MCF 10A (cell line): ENCODE measurements at regions of chr3 and their contacts with region 1.

Region 1: GRCh38 chr3:124887177-124887931 is at the start of gene ITGB5:
- DNase-seq: peak; percentile 90
- H3K4me3 Mint-ChIP-seq: peak within 1 kb of the TSS; percentile 75
- H3K27ac Mint-ChIP-seq: peak within 1 kb of the TSS; percentile 36
- H3K4me1 Mint-ChIP-seq: peaks cover 24% of the 10 kb centered on the region
- H3K27me3 Mint-ChIP-seq: no peaks in the 10 kb centered on the region
- CTCF ChIP-seq: no peak
- total RNA-seq, gene ITGB5: 100 and 101 TPM in 2 replicates

Region 2: DNA sequence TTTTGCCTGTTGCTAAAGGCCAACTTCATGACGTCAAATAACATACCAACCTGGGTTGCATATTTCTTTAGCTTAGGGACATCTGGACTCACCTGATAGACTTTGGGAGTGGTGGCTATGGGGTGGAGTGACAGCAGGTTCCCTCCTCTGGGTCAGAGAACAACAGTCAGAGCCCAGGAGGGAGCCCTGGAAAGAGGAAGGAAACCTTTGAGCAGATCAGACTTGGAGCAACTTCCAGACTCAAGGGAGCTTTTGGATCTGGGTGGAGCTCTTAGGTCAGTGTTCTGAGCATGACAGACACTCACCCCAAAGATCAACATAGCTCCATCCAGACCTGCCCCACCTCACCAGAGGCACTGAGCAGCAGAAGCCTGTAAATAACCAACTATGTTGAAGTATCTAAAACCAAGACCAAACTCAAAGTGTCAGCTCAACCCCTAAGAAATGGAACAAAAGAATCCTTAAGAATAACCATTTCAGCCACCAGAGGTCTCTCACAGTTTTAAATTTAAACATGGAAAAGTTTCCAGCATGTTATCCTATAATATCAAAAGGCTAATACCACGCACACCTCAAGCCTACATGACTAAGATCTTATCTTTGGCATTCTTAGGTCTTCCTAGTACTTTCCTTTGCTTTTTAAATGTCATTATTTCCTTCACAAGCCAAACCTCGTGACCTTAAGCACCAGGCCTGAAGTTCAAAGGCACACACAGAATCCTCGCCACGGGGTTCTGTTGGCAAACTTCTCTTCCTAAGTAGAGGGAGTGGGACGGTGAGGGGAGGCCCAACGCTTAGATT is 100.7 kb before region 1 on chr3:
- CTCF ChIA-PET with region 1: interaction called, 55 read pairs
- POLR2A ChIA-PET with region 1: interaction called, 15 read pairs
- intact Hi-C with region 1: loop called (anchors 1 kb)
- DNase-seq: peak; percentile 41
- H3K4me3 Mint-ChIP-seq: no peak overlapping the region
- H3K27ac Mint-ChIP-seq: peak overlapping the region; percentile 23
- H3K4me1 Mint-ChIP-seq: peaks cover 10% of the 10 kb centered on the region
- H3K27me3 Mint-ChIP-seq: no peaks in the 10 kb centered on the region
- CTCF ChIP-seq: peak; percentile 38

Region 3: GRCh38 chr3:124791639-124792151 is 95.7 kb before region 1 on chr3:
- CTCF ChIA-PET with region 1: interaction called, 55 read pairs
- POLR2A ChIA-PET with region 1: interaction called, 15 read pairs
- intact Hi-C with region 1: loop called (anchors 1 kb)
- DNase-seq: no peak
- H3K4me3 Mint-ChIP-seq: no peak overlapping the region
- H3K27ac Mint-ChIP-seq: no peak overlapping the region
- H3K4me1 Mint-ChIP-seq: peaks cover 28% of the 10 kb centered on the region
- H3K27me3 Mint-ChIP-seq: no peaks in the 10 kb centered on the region
- CTCF ChIP-seq: no peak

Region 4: GRCh38 chr3:124812291-124813265 is 74.8 kb before region 1 on chr3:
- CTCF ChIA-PET with region 1: no interaction called
- POLR2A ChIA-PET with region 1: interaction called, 4 read pairs
- intact Hi-C with region 1: loop called (anchors 2 kb)
- DNase-seq: peak; percentile 94
- H3K4me3 Mint-ChIP-seq: peak overlapping the region; percentile 44
- H3K27ac Mint-ChIP-seq: peak overlapping the region; percentile 49
- H3K4me1 Mint-ChIP-seq: peaks cover 44% of the 10 kb centered on the region
- H3K27me3 Mint-ChIP-seq: no peaks in the 10 kb centered on the region
- CTCF ChIP-seq: no peak

Region 5: DNA sequence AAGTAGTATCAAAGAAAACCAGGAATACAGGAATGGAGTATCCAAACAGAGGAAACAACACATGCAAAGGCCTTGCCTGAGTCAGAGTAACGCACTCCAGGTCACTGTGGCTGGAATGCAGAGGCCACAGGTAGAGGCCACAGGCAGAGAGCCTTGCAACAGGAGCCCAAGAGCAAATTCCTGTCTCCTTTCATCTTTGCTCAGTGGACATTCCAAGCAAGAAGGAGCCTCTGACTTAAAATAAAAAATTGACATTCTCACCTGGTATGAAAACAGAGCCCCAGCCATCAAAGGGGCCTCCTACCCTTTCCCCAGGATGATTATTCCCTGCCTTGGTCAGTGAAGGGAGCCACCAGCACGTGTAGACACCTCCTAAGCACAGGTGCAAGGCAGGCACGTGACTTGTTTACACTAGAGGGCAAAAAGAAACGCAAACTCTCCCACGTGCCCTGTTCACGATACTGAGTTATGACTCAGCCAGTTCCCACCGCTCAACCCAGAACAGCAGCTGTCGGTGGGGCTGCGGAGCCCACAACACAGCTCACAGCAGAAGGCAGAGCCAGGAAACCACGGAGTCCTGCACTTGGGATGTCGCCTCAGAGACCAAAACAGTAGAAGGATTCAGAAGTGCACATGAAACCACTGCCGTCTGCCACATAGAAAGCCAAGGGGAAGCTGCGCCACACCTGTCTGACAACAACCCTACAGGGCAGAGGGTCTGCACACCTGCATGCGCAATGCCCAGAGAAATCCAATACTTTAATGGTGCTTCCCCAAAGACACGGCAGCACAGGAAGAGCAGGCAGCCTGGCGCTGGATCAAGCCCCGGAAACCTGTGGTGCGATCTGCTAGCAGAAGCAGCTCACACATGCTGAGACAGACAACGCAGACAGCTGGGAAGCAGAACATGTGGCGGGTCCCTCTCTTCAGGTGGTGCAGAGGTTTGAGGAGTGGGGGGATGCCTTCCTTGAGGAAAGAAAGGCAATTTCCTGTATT is 52.3 kb before region 1 on chr3:
- CTCF ChIA-PET with region 1: interaction called, 3 read pairs
- POLR2A ChIA-PET with region 1: interaction called, 7 read pairs
- intact Hi-C with region 1: loop called (anchors 2 kb)
- DNase-seq: peak; percentile 87
- H3K4me3 Mint-ChIP-seq: peak overlapping the region; percentile 35
- H3K27ac Mint-ChIP-seq: peak overlapping the region; percentile 39
- H3K4me1 Mint-ChIP-seq: peaks cover 51% of the 10 kb centered on the region
- H3K27me3 Mint-ChIP-seq: no peaks in the 10 kb centered on the region
- CTCF ChIP-seq: no peak

Region 6: DNA sequence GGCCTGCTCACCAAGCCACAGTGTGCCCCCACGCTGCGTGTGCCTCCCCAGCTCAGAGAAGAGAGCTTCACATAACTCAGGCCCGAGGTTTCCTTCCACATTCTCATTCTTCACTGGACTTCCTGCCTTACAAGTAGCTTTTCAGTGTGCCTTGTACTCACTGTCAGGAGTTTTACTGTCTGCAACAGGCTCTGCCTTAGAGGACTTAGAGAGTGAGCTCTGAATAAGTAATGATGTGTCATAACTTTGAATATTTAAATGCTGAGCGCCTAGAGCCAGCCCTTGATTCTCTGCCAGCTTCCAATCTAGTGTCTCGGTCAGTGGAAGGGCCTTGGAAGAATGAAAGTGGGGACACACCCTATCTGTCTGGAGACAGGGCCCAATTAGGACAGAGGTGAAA is 41.9 kb before region 1 on chr3:
- CTCF ChIA-PET with region 1: interaction called, 9 read pairs
- POLR2A ChIA-PET with region 1: interaction called, 26 read pairs
- intact Hi-C with region 1: no loop called
- DNase-seq: peak; percentile 87
- H3K4me3 Mint-ChIP-seq: peak overlapping the region; percentile 12
- H3K27ac Mint-ChIP-seq: peak overlapping the region; percentile 71
- H3K4me1 Mint-ChIP-seq: peaks cover 14% of the 10 kb centered on the region
- H3K27me3 Mint-ChIP-seq: no peaks in the 10 kb centered on the region
- CTCF ChIP-seq: no peak

Region 7: DNA sequence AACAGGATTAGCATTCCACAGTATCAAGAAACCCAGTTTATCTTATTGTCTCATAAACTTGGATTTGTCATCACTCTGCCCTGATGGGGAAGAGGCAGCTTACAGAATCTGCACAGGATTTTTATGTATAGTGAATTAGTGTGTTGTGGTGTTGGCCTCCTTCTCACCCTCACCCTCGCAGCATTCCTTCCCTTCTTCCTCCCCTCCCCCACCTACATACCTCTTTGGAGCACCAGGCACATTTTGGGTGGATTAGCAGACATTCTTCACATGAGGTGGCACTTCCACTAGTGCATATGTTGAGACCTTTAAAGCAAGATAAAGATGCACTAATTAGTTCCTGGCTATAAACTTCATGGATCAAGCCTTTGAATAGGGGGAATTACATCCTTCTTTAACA is 14.1 kb before region 1 on chr3:
- CTCF ChIA-PET with region 1: interaction called, 4 read pairs
- POLR2A ChIA-PET with region 1: interaction called, 11 read pairs
- intact Hi-C with region 1: no loop called
- DNase-seq: no peak
- H3K4me3 Mint-ChIP-seq: no peak overlapping the region
- H3K27ac Mint-ChIP-seq: no peak overlapping the region
- H3K4me1 Mint-ChIP-seq: peaks cover 7% of the 10 kb centered on the region
- H3K27me3 Mint-ChIP-seq: no peaks in the 10 kb centered on the region
- CTCF ChIP-seq: no peak